ENCODE measurements at regions of chr1 and their contacts with region 1.

Region 1: GRCh38 chr1:181152892-181153633 is 64.6 kb downstream of the IER5 start:
- DNase-seq: peak; percentile 93
- ATAC-seq: peak; percentile 95

Region 2: DNA sequence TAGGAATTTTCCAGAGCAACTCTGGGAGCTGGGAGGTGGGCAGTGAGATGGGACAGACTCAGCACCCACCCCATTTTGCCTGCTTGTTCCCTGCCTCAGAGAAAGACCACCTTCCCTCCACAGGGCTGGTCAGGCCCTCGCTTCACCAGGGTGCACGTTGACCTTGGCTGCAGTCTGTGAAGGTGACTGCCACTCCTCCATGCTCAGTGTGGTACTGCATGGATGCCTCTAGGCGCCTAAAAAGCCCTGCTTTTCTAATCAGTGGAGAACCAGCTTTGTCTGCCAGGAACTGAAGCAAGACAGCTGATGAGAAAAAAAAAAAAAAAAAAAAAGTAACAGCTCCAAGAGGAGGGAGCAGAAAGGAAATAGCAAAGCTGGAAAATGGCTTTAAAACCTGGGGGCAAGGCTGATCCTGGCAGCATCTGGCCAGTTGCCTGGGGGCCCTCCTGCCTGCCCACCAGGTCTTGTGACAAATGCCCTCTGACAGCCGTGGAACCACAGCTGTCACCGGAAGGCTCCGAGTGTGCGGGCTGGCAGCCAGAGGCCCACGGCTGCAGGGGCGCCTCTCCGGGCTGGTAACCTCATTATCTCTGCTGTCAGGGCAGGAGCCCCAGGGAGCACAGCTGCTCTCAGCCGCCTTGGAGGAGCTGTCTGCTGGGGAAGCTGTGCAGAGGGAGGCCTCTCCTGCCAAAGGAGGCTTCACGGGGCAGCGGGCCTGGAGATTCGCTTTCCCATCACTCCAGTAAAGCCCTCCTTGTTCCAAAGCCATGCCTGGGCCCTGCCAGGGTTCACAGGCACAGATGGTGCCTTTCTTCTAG is 226.7 kb before region 1 on chr1:
- intact Hi-C with region 1: loop called (anchors 5 kb)
- DNase-seq: peak; percentile 86
- ATAC-seq: peak; percentile 81

Region 3: DNA sequence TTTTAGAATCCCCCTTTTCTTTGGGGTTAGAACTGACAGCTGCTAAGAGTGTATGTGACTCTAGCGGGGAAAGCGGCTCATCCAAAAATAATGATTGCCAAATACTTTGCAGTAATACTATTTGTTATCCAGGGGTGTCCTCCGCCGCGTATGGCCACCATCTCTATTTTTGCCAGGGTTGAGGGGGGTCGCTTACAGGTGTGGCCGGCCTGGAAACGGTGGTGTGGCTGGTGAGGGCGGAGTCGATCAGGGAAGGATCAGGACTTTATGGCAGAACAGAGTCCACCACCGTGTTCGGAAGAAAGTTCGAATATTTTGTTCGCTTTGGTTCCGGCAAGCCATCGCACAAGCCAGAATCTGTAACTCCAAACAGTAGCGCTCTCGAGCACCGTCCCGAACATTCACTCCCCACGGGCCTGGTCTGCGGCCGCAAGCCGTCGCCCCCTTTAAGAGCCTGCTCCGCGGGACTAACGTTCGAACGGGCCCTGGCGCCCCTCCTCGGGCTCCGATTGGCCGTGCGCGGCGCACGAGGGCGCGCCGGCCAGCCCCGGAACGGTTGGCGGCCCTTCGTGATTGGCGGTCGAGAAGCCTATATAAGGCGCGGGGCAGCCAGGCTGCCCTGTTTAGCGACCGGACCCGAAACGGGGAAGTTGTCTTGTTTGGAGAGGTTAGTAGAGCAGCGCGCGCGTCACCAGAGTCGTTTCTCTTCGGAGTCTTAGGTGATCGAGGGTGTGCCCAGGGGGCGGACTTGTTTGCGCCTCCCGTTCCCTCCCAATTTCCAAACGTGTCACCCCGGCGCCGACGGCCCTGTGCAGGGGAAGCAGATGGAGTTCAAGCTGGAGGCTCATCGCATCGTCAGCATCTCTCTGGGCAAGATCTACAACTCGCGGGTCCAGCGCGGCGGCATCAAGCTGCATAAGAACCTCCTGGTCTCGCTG is 64.7 kb before region 1 on chr1 and contains the start of gene IER5:
- intact Hi-C with region 1: loop called (anchors 2 kb)
- DNase-seq: peak; percentile 98
- ATAC-seq: peak; percentile 95
- total RNA-seq, gene IER5: 14.3 TPM